Adrenal gland (tissue), 19 donors: ENCODE measurements at regions of chr13 and their contacts with region 1.

Region 1: DNA sequence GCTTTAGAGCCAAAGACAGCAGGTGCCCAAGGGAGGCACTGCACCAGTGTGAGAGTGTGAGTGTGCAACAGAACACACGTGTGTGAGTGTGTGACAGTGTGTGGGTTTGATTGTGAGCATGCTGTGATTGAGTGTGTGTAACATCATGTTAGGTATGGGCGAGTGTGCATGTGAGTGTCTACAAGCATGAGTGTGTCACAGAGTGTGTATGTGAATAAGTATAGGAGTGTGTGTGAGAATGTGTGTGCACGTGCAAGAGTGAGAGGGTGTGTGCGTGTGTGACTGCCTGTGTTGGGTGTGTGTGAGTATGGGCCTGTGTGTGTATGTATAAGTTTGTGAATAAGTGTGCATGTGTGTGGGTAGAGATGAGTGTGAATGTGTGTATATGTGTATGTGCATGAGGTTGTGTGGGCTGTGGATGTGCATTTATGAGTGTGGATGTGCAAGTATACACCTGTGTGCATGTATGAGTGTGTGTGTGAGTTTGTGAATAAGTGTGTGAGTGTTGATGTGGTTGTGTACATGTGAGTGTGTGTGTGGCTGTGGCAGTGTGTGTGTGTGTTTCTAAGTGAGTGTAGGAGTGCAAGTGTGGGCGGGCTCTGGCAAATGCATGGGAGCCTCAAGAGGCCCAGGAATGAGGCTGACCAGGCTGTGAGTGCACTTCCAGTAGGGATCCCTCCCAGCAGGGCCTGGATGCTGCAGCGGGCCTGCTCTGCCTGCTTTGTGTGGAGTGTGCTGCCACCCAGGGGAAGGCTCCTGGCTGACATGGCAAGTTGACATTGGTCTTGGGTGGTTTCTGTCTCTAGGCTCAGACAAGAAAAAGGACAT is 198.4 kb downstream of the COL4A1 start:
- DNase-seq: peak; percentile 85 to 94 (median 90)
- H3K4me3 ChIP-seq: no peak overlapping the region
- H3K27ac ChIP-seq: peak overlapping the region in 3 of 5 donors; percentile 63 to 69 (median 68)
- H3K4me1 ChIP-seq: peaks cover 23 to 38% of the 10 kb centered on the region in 2 donors
- H3K27me3 ChIP-seq: no peaks in the 10 kb centered on the region
- CTCF ChIP-seq: peak; percentile 53 to 91 (median 84)
- POLR2A ChIP-seq: no peak

Region 2: DNA sequence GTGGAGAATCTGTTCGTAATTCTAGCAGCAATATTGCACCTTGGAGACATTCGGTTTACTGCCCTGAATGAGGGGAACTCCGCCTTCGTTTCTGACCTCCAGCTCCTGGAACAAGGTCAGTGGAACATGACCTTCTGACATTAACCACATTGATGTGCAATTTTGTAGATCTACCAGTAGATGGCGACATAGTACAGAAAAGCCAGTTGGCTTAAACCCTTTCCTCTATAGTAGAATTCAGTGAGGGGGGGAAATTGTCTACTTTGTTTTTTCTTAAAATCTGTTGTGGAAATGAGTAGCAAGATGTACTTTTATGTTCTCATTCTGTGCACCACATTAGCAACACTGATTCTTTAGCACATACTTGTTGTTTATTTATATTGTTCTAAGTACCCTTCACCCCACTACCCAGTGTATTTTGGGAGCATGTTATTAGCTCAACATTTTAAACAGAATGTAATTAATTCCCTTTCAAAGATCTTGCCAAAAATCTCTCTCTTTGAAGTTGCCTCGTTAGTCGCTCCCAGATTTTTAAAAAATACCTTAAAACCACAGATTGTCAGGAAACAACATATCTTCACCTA is 1146.9 kb before region 1 on chr13:
- intact Hi-C with region 1: loop called in 1 of 2 experiments (anchors 5 kb)
- DNase-seq: peak in 2 of 7 donors; percentile 19 to 37
- H3K4me3 ChIP-seq: no peak overlapping the region
- H3K27ac ChIP-seq: no peak overlapping the region
- H3K4me1 ChIP-seq: peaks cover 6 to 12% of the 10 kb centered on the region in 2 donors
- H3K27me3 ChIP-seq: no peaks in the 10 kb centered on the region
- CTCF ChIP-seq: peak; percentile 82 to 93 (median 87)
- POLR2A ChIP-seq: no peak

Region 3: DNA sequence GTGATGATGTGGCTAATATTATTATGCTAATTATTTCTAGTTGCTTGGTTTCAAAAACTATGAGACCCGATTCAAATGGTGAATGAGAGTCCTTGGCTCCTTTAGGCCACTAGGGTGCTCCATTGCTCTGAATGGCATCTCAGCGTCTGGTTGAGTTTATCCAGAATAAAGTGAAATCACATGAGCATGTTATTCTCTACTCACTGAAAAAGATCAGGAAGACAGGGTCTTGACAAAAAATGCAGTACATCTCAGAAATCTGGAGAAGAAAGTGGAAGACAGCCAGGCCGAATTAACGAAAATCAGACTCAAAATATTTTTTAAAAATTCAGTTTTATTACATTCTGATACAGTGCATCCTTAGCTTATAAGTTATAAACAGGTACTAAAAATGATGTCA is 962.9 kb before region 1 on chr13:
- intact Hi-C with region 1: loop called in 1 of 2 experiments (anchors 10 kb)
- DNase-seq: peak; percentile 48 to 82 (median 65)
- H3K4me3 ChIP-seq: no peak overlapping the region
- H3K27ac ChIP-seq: no peak overlapping the region
- H3K4me1 ChIP-seq: peaks cover 0 to 7% of the 10 kb centered on the region in 2 donors
- H3K27me3 ChIP-seq: no peaks in the 10 kb centered on the region
- CTCF ChIP-seq: peak; percentile 72 to 84 (median 78)
- POLR2A ChIP-seq: no peak